ENCODE measurements at regions of chr4 and their contacts with region 1.

Region 1: GRCh38 chr4:173318648-173319211 is 15.4 kb downstream of the HMGB2 start:
- DNase-seq: no peak
- ATAC-seq: peak; percentile 74

Region 2: DNA sequence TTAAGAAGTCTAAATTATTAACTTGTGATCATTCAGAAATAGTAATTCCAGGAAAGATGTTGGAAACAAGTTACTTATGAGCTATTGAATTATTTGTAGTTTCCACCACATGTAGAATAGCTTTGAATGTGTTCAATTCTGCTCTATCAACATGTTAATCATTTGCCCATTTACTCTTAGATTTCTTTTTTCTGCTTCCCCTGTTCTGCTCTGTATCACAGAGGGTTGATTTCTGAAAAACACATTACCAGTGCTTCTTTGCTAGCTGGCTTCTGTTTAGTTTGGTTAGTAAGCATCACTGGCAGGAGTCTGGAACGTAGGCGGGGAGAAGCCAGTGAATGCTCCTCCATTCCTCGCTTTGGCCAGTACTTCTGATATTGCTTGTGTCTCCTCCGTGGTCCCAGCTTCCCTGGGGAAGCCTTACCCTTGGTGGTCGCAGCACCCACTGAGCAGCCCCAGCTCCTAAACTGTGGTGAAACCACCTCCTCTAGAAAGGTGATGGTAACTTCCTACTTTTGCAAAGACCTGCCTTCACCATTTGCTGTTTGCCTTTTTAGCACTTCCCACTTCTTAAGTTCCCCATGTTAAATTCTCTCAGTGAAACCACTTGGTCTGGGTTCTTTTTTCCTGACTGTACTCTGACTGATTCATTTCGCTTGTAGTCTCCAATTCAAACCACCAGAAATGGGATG is 190.4 kb before region 1 on chr4:
- intact Hi-C with region 1: no loop called
- DNase-seq: no peak
- ATAC-seq: no peak

Region 3: DNA sequence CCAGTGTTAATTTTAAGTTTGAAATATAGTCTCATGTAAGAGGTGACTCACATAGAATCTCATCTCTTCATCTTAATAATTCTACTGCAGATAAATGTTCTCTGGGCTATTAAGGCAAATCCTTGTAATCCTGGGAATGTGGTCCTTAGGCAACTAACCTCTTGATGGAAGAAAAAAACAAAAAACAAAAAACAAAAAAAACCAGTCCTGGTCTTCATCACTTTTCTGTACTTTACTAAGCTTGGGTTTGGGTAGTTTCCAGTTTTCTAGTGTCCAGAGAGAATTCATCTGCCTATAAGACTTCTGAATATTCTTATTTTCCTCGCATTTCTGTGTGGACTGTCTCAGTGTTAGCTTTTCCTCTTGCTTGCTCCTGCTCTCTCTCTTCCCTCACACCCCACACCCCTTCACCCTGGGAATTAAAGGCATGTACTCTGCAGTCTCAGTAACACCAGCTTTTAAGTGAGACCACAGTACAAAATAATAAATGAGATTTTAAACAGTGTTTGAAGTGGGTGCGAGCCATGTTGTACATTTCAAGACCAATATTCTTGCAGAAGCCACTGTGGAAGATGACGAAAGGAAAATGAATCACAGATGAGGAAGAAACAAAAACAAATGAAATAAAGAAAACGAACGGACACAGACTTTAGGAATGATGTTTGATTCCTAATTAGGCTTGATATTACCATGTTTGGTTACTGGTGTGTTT is 159.6 kb after region 1 on chr4:
- intact Hi-C with region 1: no loop called
- DNase-seq: no peak
- ATAC-seq: peak; percentile 52

Region 4: DNA sequence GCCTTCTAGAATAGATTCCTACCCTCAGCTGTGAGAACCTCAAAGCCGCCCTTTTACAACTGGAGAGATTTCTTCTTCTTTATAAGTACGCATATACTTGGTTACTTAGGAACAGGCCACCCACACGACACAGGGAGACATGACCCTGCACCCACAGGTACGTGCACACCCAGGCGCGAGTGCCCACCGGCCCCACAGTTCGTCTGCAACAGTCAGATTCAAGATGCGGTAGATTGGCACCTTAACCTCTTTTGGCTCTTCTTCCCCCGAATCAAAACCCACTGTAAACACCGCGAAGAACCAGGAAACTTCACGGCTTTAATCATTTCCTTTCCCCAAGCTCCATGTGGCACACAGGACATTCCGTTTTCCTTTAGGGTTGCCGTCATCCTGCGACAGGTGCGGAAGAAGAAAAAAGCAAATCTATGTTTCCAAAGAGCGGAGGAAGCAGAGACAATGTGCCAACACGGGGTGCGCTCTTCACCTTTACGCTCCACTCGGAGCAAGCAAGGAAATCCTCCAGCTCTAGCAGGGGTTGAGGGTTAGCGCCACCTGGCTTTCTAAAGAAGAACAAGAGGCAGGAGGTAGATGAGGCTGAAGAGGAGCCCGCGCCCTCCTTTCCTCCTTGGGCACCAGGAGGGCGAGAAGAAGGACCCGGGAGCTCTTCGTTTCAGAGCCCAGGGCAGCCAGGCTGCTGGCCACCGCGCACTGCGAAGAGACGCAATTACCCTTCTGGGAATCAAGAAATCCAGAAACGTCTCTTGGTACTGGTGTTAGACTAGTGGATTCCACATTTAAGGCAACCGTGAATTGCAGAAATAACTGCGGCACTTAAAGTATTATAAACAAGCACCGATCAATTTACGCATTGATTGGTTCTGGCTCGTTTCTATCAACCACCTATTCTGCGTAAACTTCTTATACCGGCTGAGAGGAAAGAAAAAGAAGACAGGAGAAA is 175.6 kb after region 1 on chr4:
- intact Hi-C with region 1: loop called (anchors 10 kb)
- DNase-seq: peak; percentile 64
- ATAC-seq: peak; percentile 93

Region 5: GRCh38 chr4:173878701-173879100 is 560.0 kb after region 1 on chr4:
- intact Hi-C with region 1: no loop called
- DNase-seq: peak; percentile 41
- ATAC-seq: peak; percentile 89